ENCODE measurements at regions of chr5 and their contacts with region 1.

Region 1: DNA sequence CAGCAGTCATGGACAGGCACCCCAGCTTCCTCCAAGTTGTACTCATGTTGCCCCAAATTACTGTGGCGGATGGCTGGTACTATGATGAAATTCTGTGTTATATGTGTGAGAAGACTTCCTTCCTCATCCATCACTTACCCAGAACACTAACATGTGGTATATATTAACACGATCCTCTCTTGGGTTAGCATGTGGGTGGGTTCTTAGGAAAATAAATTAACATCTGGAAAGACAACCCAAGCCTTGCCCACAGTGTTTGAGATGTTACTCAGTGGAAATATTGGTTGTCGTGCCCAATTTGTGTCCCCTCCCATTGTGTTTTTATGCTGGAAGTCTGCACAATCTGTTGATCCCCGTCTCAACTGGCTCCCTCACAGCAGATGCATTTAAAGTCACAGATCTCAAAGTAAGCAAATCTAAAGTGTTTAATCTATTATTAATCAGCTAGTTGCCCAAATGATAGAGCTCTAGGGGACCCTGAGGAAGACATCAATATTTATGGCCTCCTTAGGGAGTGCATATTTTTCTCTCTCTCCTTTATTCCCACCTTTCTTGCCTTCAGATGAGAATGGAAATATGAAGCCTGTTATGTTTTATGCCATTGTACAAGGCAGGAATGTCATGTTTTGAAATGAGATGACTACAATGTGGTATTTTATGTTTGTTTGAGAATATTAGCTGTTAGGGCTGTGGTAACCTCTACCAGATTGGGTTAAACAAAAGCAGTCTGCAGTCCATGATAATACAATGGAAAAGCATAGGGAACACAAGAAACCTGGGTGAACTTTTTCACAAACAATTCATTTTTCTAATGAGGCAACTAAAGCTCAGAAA is 93.9 kb downstream of the GRIA1 start:
- DNase-seq: no peak
- H3K4me3 ChIP-seq: no peak overlapping the region
- H3K27ac ChIP-seq: no peak overlapping the region
- H3K4me1 ChIP-seq: no peaks in the 10 kb centered on the region
- H3K27me3 ChIP-seq: no peaks in the 10 kb centered on the region
- CTCF ChIP-seq: no peak

Region 2: GRCh38 chr5:152514827-152515397 is 1069.4 kb before region 1 on chr5:
- CTCF ChIA-PET with region 1: no interaction called
- POLR2A ChIA-PET with region 1: no interaction called
- intact Hi-C with region 1: no loop called
- DNase-seq: no peak
- H3K4me3 ChIP-seq: no peak overlapping the region
- H3K27ac ChIP-seq: no peak overlapping the region
- H3K4me1 ChIP-seq: no peaks in the 10 kb centered on the region
- H3K27me3 ChIP-seq: no peaks in the 10 kb centered on the region
- CTCF ChIP-seq: peak; percentile 60

Region 3: GRCh38 chr5:153480401-153480800 is 103.9 kb before region 1 on chr5:
- CTCF ChIA-PET with region 1: interaction called, 16 read pairs
- POLR2A ChIA-PET with region 1: no interaction called
- intact Hi-C with region 1: no loop called
- DNase-seq: no peak
- H3K4me3 ChIP-seq: no peak overlapping the region
- H3K27ac ChIP-seq: no peak overlapping the region
- H3K4me1 ChIP-seq: no peaks in the 10 kb centered on the region
- H3K27me3 ChIP-seq: no peaks in the 10 kb centered on the region
- CTCF ChIP-seq: no peak

Region 4: DNA sequence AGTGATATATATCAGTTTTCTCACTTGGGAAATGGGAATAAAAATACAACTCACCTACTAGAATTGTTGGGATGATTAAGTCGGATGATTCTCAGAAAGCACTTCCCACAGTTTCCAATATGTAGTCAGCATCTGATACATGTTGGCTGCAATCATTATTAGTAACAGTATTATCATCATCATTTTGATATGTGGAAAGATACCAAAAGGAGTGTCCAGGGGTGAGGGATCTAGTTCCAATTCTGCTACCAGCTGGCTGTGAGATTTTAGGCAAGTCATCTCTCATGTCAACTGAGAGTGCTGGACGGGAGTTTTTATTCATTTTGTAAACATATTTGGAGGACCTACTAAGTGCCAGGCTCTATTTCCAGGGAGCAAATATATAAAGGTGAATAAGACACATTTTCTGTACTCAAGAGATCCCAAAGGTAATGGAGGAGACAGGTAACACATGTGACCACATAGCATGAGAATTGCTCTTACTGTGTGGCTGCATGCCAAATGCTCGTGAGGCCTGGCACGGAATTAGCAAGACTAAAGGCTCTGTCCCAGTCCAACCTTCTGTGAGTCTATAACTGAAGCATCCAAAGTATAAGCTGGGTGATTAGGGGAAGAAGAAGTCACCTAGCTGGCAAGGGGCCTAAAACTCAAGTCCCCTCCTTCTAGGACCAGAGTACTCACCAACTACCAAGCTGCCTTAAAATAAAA is 10.9 kb before region 1 on chr5:
- CTCF ChIA-PET with region 1: no interaction called
- POLR2A ChIA-PET with region 1: interaction called, 11 read pairs
- intact Hi-C with region 1: no loop called
- DNase-seq: no peak
- H3K4me3 ChIP-seq: no peak overlapping the region
- H3K27ac ChIP-seq: no peak overlapping the region
- H3K4me1 ChIP-seq: no peaks in the 10 kb centered on the region
- H3K27me3 ChIP-seq: no peaks in the 10 kb centered on the region
- CTCF ChIP-seq: no peak

Region 5: DNA sequence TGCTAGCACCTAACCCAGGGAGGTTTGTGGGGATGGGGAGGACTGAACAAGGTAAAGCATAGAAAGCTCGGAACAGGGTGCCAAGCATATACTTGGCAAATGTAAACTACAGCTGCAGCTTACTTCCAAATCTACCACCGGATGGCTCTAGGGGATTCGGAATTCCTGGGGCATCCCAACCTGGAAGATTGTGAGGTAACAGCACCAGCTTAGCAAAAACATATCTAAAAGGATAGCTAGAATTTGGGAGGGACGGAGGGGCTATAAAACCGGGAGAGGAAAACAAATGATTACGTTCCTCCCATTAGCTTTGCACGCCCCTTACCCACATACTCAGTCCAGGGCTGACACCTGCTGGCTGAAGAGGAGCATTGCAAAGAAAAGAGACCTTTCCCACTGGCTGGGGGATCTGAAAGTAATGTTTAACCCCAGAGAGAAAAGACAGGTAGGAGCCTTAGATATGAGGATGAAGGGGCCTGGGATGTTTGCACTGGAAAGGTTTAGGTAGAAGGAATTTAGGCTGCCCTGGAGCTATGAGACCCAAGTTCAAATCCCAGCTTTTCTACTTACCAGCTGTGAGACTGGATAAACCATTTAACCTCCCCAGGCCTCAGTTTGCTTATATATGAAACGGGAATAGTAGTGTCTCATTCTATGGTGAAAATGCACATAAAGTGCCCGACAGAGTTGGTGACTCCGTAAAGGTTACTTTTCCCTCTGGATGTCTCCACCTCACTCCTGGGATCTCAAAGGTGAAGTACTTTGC is 380.7 kb after region 1 on chr5:
- CTCF ChIA-PET with region 1: no interaction called
- POLR2A ChIA-PET with region 1: no interaction called
- intact Hi-C with region 1: no loop called
- DNase-seq: peak in 1 of 2 experiments; percentile 51
- H3K4me3 ChIP-seq: no peak overlapping the region
- H3K27ac ChIP-seq: no peak overlapping the region
- H3K4me1 ChIP-seq: no peaks in the 10 kb centered on the region
- H3K27me3 ChIP-seq: peaks cover 31% of the 10 kb centered on the region
- CTCF ChIP-seq: peak; percentile 95

Measured in PC-9 (cell line).